ENCODE measurements at regions of chr1 and their contacts with region 1.

Region 1: DNA sequence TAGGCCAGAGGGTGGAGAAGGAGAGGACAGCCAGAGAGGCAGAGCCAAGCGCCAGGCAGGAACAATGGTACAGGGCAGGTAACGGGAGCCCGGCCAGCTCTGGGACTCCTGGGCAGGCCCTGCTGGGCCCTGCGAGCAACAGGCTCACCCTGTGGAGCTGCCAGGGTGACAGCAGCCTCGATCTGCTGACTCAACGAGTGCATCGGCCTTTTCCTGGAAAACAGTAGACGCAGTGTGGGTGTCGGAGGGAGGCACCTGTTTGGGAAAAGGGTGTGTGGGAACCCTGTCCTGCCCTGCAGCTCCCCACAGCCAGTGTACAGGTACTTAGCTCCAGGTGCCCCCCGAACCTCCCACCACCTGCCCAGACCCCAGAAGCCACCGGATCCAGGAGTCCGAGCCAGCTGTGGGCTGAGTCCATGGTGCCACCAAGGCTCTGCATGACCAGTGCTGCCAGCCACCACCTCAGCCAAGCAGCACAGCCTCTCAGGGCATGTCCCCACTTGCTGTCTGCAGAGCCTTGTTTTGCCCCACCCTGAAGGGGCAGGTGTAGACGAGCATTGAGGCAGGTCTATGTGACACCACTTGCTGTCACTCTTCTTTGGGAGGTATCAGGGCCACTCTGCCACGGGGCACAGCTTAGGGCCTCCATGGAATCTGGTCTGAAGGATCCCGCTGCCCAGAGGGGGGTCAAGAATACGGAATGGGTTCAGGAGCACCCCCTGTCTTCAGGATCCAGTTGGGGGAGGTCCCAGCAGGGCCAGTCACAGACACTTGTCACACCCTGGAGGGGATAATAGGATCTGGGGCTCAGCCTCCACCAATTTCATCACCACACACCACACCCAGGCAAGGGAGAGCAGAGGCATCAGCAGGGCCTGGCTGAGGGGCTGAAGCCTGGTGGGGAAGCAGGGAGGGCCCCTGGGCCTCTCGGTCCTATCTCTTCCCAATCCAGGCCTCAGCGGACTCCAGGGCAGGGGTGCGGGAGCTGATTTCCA is 27.8 kb downstream of the ARHGEF19 start:
- DNase-seq: no peak
- H3K4me3 ChIP-seq: no peak overlapping the region
- H3K27ac ChIP-seq: peak overlapping the region; percentile 62 to 97
- H3K4me1 ChIP-seq: peaks cover 11 to 22% of the 10 kb centered on the region in 2 donors
- H3K27me3 ChIP-seq: no peaks in the 10 kb centered on the region
- CTCF ChIP-seq: no peak
- POLR2A ChIP-seq: no peak

Region 2: GRCh38 chr1:14292520-14292919 is 1892.1 kb before region 1 on chr1:
- intact Hi-C with region 1: no loop called
- DNase-seq: no peak
- H3K4me3 ChIP-seq: no peak overlapping the region
- H3K27ac ChIP-seq: no peak overlapping the region
- H3K4me1 ChIP-seq: no peaks in the 10 kb centered on the region
- H3K27me3 ChIP-seq: no peaks in the 10 kb centered on the region
- CTCF ChIP-seq: no peak
- POLR2A ChIP-seq: no peak

Region 3: DNA sequence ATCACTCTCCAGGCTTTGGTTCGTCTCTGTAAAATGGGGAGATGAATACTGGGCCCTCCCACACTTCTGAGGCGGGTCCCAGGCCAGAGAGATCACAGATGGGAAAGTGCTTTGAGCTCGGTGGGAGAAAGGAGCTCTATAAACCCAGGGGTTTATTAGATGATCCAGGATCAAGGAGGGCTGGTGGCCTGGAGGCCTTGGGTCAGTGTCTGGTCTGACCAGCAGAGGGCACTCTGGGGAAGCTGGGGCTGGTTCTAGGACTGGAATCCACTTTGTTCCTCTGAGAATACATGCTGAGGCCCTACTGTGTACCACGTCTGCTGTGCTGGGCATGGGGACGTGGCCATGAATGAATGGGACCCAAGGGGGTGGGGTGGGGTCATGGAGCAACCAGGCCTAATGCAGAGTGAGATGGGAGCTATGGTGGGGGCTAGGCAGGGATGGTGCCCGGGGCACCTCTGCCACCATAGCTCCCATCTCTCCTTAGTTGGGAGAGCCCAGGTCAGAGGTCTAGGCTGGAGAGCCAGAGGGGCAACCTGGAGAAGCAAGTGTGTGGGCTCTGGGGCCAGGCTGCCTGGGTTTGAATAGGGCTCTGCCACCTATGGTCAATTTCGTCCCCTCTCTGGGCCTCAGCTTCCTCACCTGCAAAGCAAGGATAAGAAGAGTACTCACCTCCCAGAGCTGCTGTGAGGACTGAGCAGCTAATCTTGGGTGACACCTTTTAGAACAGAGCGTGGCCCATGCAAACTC is 102.1 kb before region 1 on chr1:
- intact Hi-C with region 1: loop called (anchors 2 kb)
- DNase-seq: no peak
- H3K4me3 ChIP-seq: no peak overlapping the region
- H3K27ac ChIP-seq: no peak overlapping the region
- H3K4me1 ChIP-seq: no peaks in the 10 kb centered on the region
- H3K27me3 ChIP-seq: no peaks in the 10 kb centered on the region
- CTCF ChIP-seq: peak; percentile 63 to 91 (median 66)
- POLR2A ChIP-seq: no peak

Region 4: GRCh38 chr1:16226490-16227179 is 42.0 kb after region 1 on chr1:
- intact Hi-C with region 1: no loop called
- DNase-seq: no peak
- H3K4me3 ChIP-seq: peak overlapping the region in 1 of 3 donors; percentile 47
- H3K27ac ChIP-seq: no peak overlapping the region
- H3K4me1 ChIP-seq: no peaks in the 10 kb centered on the region
- H3K27me3 ChIP-seq: peaks cover 4 to 7% of the 10 kb centered on the region in 2 donors
- CTCF ChIP-seq: no peak
- POLR2A ChIP-seq: no peak